Activated CD8-positive, alpha-beta T cell treated with anti-CD3 and anti-CD28 coated beads for 36 hours (primary cell): ENCODE measurements at regions of chr15 and their contacts with region 1.

Region 1: DNA sequence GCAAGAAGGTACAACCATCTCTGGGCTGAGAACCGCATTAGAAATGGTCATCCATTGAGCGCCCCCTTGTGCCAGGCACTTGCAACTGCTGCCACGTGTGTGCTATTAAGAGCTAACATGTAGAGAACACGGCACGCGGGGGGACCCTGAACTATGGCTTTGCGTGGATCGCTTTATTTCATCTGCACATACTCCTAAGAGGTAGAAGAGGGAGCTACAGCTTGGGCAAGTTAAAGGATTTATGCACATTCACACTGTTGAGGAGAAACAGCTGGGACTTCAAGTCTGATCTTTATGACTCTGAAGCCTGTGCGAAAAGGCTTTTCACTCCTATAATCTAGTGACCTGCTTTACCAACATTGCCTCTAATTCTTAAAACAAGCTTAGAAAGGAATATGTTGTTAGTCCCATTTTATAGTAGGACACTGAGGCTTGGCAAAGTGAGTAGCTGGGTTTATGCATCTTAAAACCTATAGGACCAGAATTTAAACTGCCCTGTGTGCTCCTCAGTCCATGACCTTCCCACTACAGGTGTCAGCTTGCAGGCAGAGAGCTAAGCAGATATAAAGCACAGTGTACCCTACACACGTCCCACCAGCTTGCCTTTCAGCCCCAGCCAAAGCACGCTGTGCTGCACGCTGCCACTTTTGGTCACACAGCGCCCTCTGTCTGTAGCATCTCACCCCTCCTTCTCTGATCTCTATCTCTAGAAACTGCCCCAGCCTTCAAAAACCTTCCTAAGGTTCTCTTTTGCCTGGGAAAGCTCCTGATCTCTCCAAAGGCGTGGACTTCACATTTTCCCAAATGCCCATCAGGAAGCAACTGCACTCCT is 57.8 kb downstream of the STARD5 start:
- DNase-seq: peak; percentile 92
- ATAC-seq: peak; percentile 83
- H3K4me3 Mint-ChIP-seq: peak overlapping the region; percentile 56
- H3K27ac Mint-ChIP-seq: peak overlapping the region; percentile 82
- H3K4me1 Mint-ChIP-seq: peaks cover 49% of the 10 kb centered on the region
- H3K27me3 Mint-ChIP-seq: peaks cover 3% of the 10 kb centered on the region
- CTCF ChIP-seq: peak; percentile 68

Region 2: GRCh38 chr15:81000624-81001151 is 265.5 kb before region 1 on chr15 and contains the start of gene TLNRD1:
- CTCF ChIA-PET with region 1: interaction called, 36 read pairs
- POLR2A ChIA-PET with region 1: interaction called, 3 read pairs
- intact Hi-C with region 1: loop called (anchors 10 kb)
- DNase-seq: peak; percentile 91
- ATAC-seq: peak; percentile 69
- H3K4me3 Mint-ChIP-seq: peak within 1 kb of the TSS; percentile 94
- H3K27ac Mint-ChIP-seq: peak within 1 kb of the TSS; percentile 98
- H3K4me1 Mint-ChIP-seq: peaks cover 49% of the 10 kb centered on the region
- H3K27me3 Mint-ChIP-seq: no peaks in the 10 kb centered on the region
- CTCF ChIP-seq: no peak
- total RNA-seq, gene TLNRD1: 19.3 to 20.1 TPM

Region 3: GRCh38 chr15:81111510-81112470 is 154.4 kb before region 1 on chr15:
- CTCF ChIA-PET with region 1: interaction called, 195 read pairs
- POLR2A ChIA-PET with region 1: no interaction called
- intact Hi-C with region 1: loop called (anchors 1 kb)
- DNase-seq: peak; percentile 7
- ATAC-seq: peak; percentile 64
- H3K4me3 Mint-ChIP-seq: no peak overlapping the region
- H3K27ac Mint-ChIP-seq: no peak overlapping the region
- H3K4me1 Mint-ChIP-seq: peaks cover 6% of the 10 kb centered on the region
- H3K27me3 Mint-ChIP-seq: peaks cover 23% of the 10 kb centered on the region
- CTCF ChIP-seq: no peak

Region 4: GRCh38 chr15:81216422-81216821 is 49.7 kb before region 1 on chr15:
- CTCF ChIA-PET with region 1: interaction called, 10 read pairs
- POLR2A ChIA-PET with region 1: no interaction called
- intact Hi-C with region 1: no loop called
- DNase-seq: no peak
- ATAC-seq: no peak
- H3K4me3 Mint-ChIP-seq: no peak overlapping the region
- H3K27ac Mint-ChIP-seq: no peak overlapping the region
- H3K4me1 Mint-ChIP-seq: no peaks in the 10 kb centered on the region
- H3K27me3 Mint-ChIP-seq: peaks cover 4% of the 10 kb centered on the region
- CTCF ChIP-seq: no peak

Region 5: GRCh38 chr15:81296673-81297072 is 30.5 kb after region 1 on chr15:
- CTCF ChIA-PET with region 1: interaction called, 50 read pairs
- POLR2A ChIA-PET with region 1: interaction called, 4 read pairs
- intact Hi-C with region 1: no loop called
- DNase-seq: peak; percentile 89
- ATAC-seq: peak; percentile 49
- H3K4me3 Mint-ChIP-seq: peak overlapping the region; percentile 98
- H3K27ac Mint-ChIP-seq: peak overlapping the region; percentile 98
- H3K4me1 Mint-ChIP-seq: peaks cover 51% of the 10 kb centered on the region
- H3K27me3 Mint-ChIP-seq: no peaks in the 10 kb centered on the region
- CTCF ChIP-seq: no peak

Region 6: GRCh38 chr15:81336568-81336967 is 70.4 kb after region 1 on chr15:
- CTCF ChIA-PET with region 1: interaction called, 50 read pairs
- POLR2A ChIA-PET with region 1: interaction called, 3 read pairs
- intact Hi-C with region 1: no loop called
- DNase-seq: peak; percentile 60
- ATAC-seq: peak; percentile 55
- H3K4me3 Mint-ChIP-seq: no peak overlapping the region
- H3K27ac Mint-ChIP-seq: no peak overlapping the region
- H3K4me1 Mint-ChIP-seq: peaks cover 7% of the 10 kb centered on the region
- H3K27me3 Mint-ChIP-seq: no peaks in the 10 kb centered on the region
- CTCF ChIP-seq: peak; percentile 43